Panc1 (cell line): ENCODE measurements at regions of chr2 and their contacts with region 1.

Region 1: GRCh38 chr2:218447072-218447471 is 28.1 kb downstream of the VIL1 start:
- DNase-seq: no peak
- ATAC-seq: no peak
- H3K4me3 ChIP-seq: no peak overlapping the region
- H3K27ac ChIP-seq: no peak overlapping the region
- H3K4me1 ChIP-seq: peaks cover 18% of the 10 kb centered on the region
- H3K27me3 ChIP-seq: no peaks in the 10 kb centered on the region
- CTCF ChIP-seq: no peak

Region 2: GRCh38 chr2:217604527-217605194 is 842.4 kb before region 1 on chr2:
- CTCF ChIA-PET with region 1: no interaction called
- POLR2A ChIA-PET with region 1: no interaction called
- in situ Hi-C with region 1: no loop called
- intact Hi-C with region 1: no loop called
- DNase-seq: no peak
- ATAC-seq: no peak
- H3K4me3 ChIP-seq: no peak overlapping the region
- H3K27ac ChIP-seq: no peak overlapping the region
- H3K4me1 ChIP-seq: no peaks in the 10 kb centered on the region
- H3K27me3 ChIP-seq: peaks cover 3% of the 10 kb centered on the region; the same call in 1 of the 2 replicates
- CTCF ChIP-seq: no peak

Region 3: DNA sequence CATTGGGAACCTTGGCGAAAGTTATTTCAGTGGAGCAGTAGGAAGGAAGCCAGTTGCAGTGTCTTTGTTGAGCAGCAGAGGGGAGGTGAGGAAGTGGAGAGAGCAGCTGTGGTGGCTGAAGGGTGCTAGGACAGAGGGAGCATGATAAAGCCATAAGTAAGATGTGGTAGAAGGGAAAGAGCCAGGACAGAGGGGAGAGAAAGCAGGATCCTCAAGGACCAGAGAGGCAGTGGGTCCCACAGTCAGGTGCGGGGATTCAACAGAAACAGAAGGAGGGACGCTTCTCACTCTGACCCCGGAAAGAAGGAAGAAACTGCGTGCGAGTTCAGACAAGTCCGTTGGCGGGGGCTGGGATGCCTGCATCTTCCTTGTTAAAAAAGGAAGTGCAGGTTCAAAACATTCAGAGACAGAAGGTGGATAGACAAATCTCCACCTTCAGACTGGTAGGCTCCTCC is 321.4 kb before region 1 on chr2 and contains the start of gene CXCR2:
- CTCF ChIA-PET with region 1: no interaction called
- POLR2A ChIA-PET with region 1: no interaction called
- in situ Hi-C with region 1: no loop called
- intact Hi-C with region 1: no loop called
- DNase-seq: no peak
- ATAC-seq: no peak; the same call in 1 of the 2 replicates
- H3K4me3 ChIP-seq: no peak within 1 kb of the TSS
- H3K27ac ChIP-seq: no peak within 1 kb of the TSS
- H3K4me1 ChIP-seq: no peaks in the 10 kb centered on the region
- H3K27me3 ChIP-seq: 0 out of 2 replicates have a peak, but pooled peaks cover 3% of the 10 kb centered on the region
- CTCF ChIP-seq: no peak
- total RNA-seq, gene CXCR2: not detected

Region 4: DNA sequence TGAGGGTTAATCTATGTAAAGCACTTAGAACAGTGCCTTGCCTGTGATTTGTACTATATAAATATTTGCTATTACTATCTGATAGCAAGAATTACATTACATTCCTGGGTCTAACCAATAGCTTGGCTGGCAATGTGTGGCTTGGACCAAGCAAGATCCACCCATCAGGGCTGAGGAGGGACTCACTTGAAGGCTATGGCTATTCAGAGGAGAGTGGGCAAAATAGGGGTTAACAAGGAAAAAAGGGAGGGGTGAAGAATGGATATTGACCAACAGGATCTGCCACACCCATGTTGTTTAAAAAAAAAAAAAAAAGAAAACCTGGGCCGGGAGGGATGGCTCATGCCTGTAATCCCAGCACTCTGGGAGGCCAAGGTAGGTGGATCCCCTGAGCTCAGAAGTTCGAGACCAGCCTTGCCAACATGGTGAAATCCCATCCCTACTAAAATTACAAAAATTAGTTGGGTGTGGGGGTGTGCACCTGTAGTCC is 134.8 kb before region 1 on chr2:
- CTCF ChIA-PET with region 1: no interaction called
- POLR2A ChIA-PET with region 1: no interaction called
- in situ Hi-C with region 1: no loop called
- intact Hi-C with region 1: no loop called
- DNase-seq: no peak
- ATAC-seq: no peak
- H3K4me3 ChIP-seq: no peak overlapping the region
- H3K27ac ChIP-seq: no peak overlapping the region
- H3K4me1 ChIP-seq: no peaks in the 10 kb centered on the region
- H3K27me3 ChIP-seq: no peaks in the 10 kb centered on the region
- CTCF ChIP-seq: no peak

Region 5: DNA sequence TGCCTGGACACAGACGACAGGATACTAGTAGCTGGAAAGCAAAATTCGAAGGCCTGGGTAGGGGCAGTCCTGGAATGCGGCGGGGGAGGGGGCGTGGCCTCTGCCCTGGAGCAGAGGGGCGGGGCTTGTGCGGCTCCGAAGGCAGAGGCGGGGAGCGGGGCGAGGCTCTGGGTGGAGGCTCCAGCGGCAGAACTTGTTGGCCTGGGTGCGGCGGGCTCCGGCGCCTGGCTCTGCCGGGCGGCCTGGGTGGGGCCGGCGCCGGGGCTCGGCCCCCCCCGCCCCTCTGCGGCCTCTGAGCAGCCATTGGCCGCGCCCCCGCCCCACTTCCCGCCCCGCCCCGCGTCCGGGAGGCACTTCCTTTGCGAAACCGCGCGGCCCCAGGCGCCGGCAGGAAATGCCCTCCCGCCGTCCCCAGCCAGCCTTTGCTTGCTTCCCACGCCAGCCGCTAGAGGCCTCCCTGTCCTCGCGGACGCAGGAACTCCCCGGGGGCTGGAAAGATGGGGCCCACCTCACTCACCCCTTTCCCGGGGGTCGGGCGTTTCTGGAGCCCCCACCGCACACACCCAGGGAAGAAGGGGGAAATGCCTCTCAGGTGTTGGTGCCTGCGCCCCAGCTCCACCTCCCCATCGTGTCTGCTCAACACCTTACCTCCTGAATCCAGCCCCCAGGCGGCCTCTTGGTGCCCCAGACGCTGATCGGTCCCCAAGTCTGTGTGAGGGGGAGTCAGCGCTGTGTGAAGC is 40.7 kb before region 1 on chr2:
- CTCF ChIA-PET with region 1: interaction called, 11 read pairs
- POLR2A ChIA-PET with region 1: no interaction called
- in situ Hi-C with region 1: no loop called
- intact Hi-C with region 1: no loop called
- DNase-seq: no peak
- ATAC-seq: peak; percentile 89
- H3K4me3 ChIP-seq: peak overlapping the region; percentile 36 to 61
- H3K27ac ChIP-seq: peak overlapping the region; percentile 95
- H3K4me1 ChIP-seq: peaks cover 51% of the 10 kb centered on the region
- H3K27me3 ChIP-seq: no peaks in the 10 kb centered on the region
- CTCF ChIP-seq: peak; percentile 93

Region 6: DNA sequence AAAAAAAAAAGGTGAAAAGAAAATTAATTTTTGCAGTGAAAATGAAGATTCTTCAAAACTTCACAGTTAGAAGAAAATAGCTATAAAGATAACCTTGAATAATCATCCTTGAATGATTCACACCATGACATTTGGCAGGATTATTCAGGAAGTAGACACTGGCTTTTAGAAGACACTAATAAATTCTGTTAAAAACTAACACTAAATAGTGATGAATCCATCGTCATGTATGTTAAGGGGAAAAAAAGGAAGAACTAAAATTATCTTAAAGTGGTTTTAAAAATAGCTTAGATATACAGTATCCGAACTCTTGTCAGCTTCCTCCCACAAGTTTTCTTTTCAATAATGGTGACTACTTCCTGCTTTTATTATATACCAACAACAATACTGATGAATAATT is 110.9 kb after region 1 on chr2:
- CTCF ChIA-PET with region 1: no interaction called
- POLR2A ChIA-PET with region 1: no interaction called
- in situ Hi-C with region 1: no loop called
- intact Hi-C with region 1: no loop called
- DNase-seq: no peak
- ATAC-seq: no peak
- H3K4me3 ChIP-seq: no peak overlapping the region
- H3K27ac ChIP-seq: no peak overlapping the region
- H3K4me1 ChIP-seq: no peaks in the 10 kb centered on the region
- H3K27me3 ChIP-seq: no peaks in the 10 kb centered on the region
- CTCF ChIP-seq: no peak